ENCODE measurements at regions of chr16 and their contacts with region 1.

Region 1: DNA sequence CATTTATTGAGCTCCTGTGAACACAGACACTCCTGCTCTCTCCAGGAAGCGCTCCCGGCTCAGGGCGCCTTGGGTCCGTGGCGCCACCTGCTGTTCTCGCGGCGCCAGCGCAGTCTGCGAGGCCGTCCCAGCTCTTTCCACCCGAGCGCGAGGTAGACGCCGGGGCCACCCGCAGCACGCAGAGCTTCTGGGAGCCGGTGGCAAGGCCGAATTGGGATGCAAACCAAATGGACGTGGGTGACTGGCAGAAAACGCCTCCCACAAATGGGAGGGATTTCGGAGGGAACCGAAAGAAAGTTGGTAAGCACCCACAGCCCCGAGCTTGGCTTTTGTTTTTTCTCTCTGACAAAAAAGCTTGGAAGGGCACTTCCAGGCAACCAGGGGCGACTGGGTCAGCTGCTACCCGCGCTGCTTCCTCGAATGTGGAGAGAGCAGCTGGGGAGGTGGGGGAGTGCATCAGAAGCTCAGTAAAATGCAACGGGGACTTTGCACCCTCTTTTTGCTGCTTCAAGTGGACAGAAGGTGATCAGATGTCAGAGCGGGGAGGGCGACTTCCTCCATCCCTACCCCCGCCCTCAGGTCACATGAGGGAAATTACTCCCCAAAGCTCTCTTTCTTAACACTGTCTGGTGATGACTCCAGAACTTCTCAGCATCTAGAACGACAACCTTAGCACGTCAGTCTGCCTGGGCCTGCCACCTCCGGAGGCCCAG is 13.5 kb upstream of the N4BP1 start:
- DNase-seq: peak; percentile 73 to 98 (median 86)
- ATAC-seq: peak; percentile 99
- H3K4me3 ChIP-seq: peak overlapping the region; percentile 29 to 42
- H3K27ac ChIP-seq: peak overlapping the region; percentile 66 to 91
- H3K4me1 ChIP-seq: peaks cover 10 to 58% of the 10 kb centered on the region in 2 donors
- H3K27me3 ChIP-seq: no peaks in the 10 kb centered on the region
- CTCF ChIP-seq: peak; percentile 98 to 99

Region 2: GRCh38 chr16:48365581-48366164 is 257.8 kb before region 1 on chr16:
- intact Hi-C with region 1: loop called in 1 of 2 experiments (anchors 10 kb)
- DNase-seq: peak; percentile 57 to 99 (median 92)
- ATAC-seq: peak; percentile 99
- H3K4me3 ChIP-seq: peak overlapping the region; percentile 30 to 56
- H3K27ac ChIP-seq: peak overlapping the region; percentile 83 to 91
- H3K4me1 ChIP-seq: peaks cover 17 to 51% of the 10 kb centered on the region in 2 donors
- H3K27me3 ChIP-seq: no peaks in the 10 kb centered on the region
- CTCF ChIP-seq: no peak